ENCODE measurements at regions of chr11 and their contacts with region 1.

Region 1: DNA sequence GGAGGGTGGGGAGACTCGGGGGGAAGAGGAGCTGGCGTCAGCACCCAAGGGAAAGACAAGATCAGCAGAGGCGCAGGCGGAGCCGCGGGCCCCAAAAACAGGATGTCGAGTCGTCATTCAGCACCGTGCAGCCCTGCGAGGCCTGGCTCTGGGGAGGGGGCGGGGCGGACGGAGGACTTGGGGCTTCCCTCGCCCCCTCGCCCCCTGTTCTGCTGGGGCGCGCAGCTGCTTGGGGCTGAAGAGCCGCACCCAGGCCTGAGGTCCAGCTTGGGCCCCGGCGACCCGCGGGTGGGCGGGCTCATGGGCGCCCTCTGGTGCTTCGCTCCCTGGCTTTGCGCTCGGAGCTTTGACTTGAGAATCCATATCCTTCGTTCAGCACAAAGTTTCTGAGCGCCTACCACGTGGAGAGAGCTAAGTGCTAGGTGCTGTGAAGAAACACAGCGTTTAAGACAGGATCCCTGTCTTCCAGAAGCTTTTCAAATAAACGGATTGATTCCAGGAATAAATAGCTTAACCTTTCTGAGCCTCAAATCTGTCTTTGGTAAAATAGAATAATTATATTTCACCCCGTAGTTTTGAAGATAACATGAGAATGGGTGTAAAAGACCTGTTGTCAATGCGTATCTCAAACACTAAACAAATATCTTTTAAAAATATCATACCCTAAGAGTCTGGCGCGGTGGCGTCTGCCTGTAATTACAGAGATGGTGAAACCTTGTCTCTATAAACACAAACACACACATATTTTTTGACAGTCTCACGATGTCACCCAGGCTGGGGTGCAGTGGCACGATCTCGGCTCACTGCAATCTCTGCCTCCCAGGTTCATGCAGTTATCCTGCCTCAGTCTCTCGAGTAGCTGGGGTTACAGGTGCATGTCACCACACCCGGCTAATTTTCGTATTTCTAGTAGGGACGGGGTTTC is 929 bp upstream of the RHOG start:
- DNase-seq: peak; percentile 80 to 98 (median 94)
- ATAC-seq: peak; percentile 27
- H3K4me3 ChIP-seq: peak overlapping the region; percentile 70 to 95
- H3K4me3 Mint-ChIP-seq: peak overlapping the region; percentile 85
- H3K27ac ChIP-seq: peak overlapping the region; percentile 92 to 95
- H3K27ac Mint-ChIP-seq: peak overlapping the region; percentile 97
- H3K4me1 ChIP-seq: peaks cover 34% of the 10 kb centered on the region
- H3K4me1 Mint-ChIP-seq: peaks cover 46% of the 10 kb centered on the region
- H3K27me3 ChIP-seq: no peaks in the 10 kb centered on the region
- H3K27me3 Mint-ChIP-seq: no peaks in the 10 kb centered on the region
- CTCF ChIP-seq: peak; percentile 66

Region 2: GRCh38 chr11:3632070-3632660 is 209.5 kb before region 1 on chr11:
- CTCF ChIA-PET with region 1: no interaction called
- POLR2A ChIA-PET with region 1: no interaction called
- intact Hi-C with region 1: no loop called
- DNase-seq: no peak
- ATAC-seq: no peak
- H3K4me3 ChIP-seq: no peak overlapping the region
- H3K4me3 Mint-ChIP-seq: no peak overlapping the region
- H3K27ac ChIP-seq: no peak overlapping the region
- H3K27ac Mint-ChIP-seq: no peak overlapping the region
- H3K4me1 ChIP-seq: no peaks in the 10 kb centered on the region
- H3K4me1 Mint-ChIP-seq: no peaks in the 10 kb centered on the region
- H3K27me3 ChIP-seq: no peaks in the 10 kb centered on the region
- H3K27me3 Mint-ChIP-seq: peaks cover 8% of the 10 kb centered on the region
- CTCF ChIP-seq: no peak

Region 3: GRCh38 chr11:3781423-3781822 is 60.3 kb before region 1 on chr11:
- CTCF ChIA-PET with region 1: interaction called, 5 read pairs
- POLR2A ChIA-PET with region 1: interaction called, 4 read pairs
- intact Hi-C with region 1: loop called in 1 of 2 experiments (anchors 1 kb)
- DNase-seq: peak in 1 of 9 experiments; percentile 32
- ATAC-seq: no peak
- H3K4me3 ChIP-seq: no peak overlapping the region
- H3K4me3 Mint-ChIP-seq: no peak overlapping the region
- H3K27ac ChIP-seq: no peak overlapping the region
- H3K27ac Mint-ChIP-seq: no peak overlapping the region
- H3K4me1 ChIP-seq: peaks cover 34% of the 10 kb centered on the region
- H3K4me1 Mint-ChIP-seq: peaks cover 48% of the 10 kb centered on the region
- H3K27me3 ChIP-seq: no peaks in the 10 kb centered on the region
- H3K27me3 Mint-ChIP-seq: no peaks in the 10 kb centered on the region
- CTCF ChIP-seq: no peak

Region 4: GRCh38 chr11:3807909-3808860 is 33.5 kb before region 1 on chr11 and contains the start of gene PGAP2:
- CTCF ChIA-PET with region 1: interaction called, 15 read pairs
- POLR2A ChIA-PET with region 1: interaction called, 20 read pairs
- intact Hi-C with region 1: loop called in 1 of 2 experiments (anchors 1 kb)
- DNase-seq: peak; percentile 28 to 76 (median 60)
- ATAC-seq: peak; percentile 71
- H3K4me3 ChIP-seq: peak within 1 kb of the TSS; percentile 71 to 98
- H3K4me3 Mint-ChIP-seq: peak within 1 kb of the TSS; percentile 97
- H3K27ac ChIP-seq: peak within 1 kb of the TSS; percentile 49 to 62
- H3K27ac Mint-ChIP-seq: peak within 1 kb of the TSS; percentile 91
- H3K4me1 ChIP-seq: peaks cover 5% of the 10 kb centered on the region
- H3K4me1 Mint-ChIP-seq: peaks cover 15% of the 10 kb centered on the region
- H3K27me3 ChIP-seq: no peaks in the 10 kb centered on the region
- H3K27me3 Mint-ChIP-seq: no peaks in the 10 kb centered on the region
- CTCF ChIP-seq: peak; percentile 59
- total RNA-seq, gene PGAP2: 16.3 to 18.5 TPM

Region 5: GRCh38 chr11:3894128-3894731 is 52.5 kb after region 1 on chr11:
- CTCF ChIA-PET with region 1: no interaction called
- POLR2A ChIA-PET with region 1: no interaction called
- intact Hi-C with region 1: no loop called
- DNase-seq: peak in 4 of 9 experiments; percentile 12 to 49 (median 27)
- ATAC-seq: peak; percentile 57
- H3K4me3 ChIP-seq: no peak overlapping the region
- H3K4me3 Mint-ChIP-seq: peak overlapping the region; percentile 16
- H3K27ac ChIP-seq: peak overlapping the region in 1 of 2 experiments; percentile 45
- H3K27ac Mint-ChIP-seq: peak overlapping the region; percentile 88
- H3K4me1 ChIP-seq: peaks cover 32% of the 10 kb centered on the region
- H3K4me1 Mint-ChIP-seq: peaks cover 63% of the 10 kb centered on the region
- H3K27me3 ChIP-seq: no peaks in the 10 kb centered on the region
- H3K27me3 Mint-ChIP-seq: no peaks in the 10 kb centered on the region
- CTCF ChIP-seq: no peak

Region 6: DNA sequence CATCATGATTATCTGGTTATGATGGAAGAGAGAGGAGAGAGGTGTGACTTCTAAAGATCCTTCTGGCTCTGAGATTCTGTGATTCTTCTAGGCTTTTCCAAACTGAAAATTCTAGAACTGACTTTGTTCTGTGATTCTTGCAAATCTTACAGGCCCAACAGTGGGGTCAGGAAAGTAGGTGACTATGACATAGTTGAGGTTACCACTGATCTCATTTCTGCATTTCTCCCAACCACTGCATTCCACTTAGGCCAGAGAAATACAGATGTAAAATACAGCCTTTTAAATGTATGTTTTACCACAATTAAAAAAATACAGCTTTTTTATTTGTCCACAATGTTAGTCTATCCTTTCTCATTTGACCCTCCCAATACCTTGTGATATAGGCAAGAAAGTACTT is 97.5 kb after region 1 on chr11:
- CTCF ChIA-PET with region 1: interaction called, 10 read pairs
- POLR2A ChIA-PET with region 1: interaction called, 4 read pairs
- intact Hi-C with region 1: no loop called
- DNase-seq: no peak
- ATAC-seq: peak; percentile 26
- H3K4me3 ChIP-seq: no peak overlapping the region
- H3K4me3 Mint-ChIP-seq: no peak overlapping the region
- H3K27ac ChIP-seq: no peak overlapping the region
- H3K27ac Mint-ChIP-seq: peak overlapping the region; percentile 78
- H3K4me1 ChIP-seq: peaks cover 61% of the 10 kb centered on the region
- H3K4me1 Mint-ChIP-seq: peaks cover 92% of the 10 kb centered on the region
- H3K27me3 ChIP-seq: no peaks in the 10 kb centered on the region
- H3K27me3 Mint-ChIP-seq: no peaks in the 10 kb centered on the region
- CTCF ChIP-seq: no peak

Region 7: GRCh38 chr11:3959015-3959919 is 117.6 kb after region 1 on chr11:
- CTCF ChIA-PET with region 1: no interaction called
- POLR2A ChIA-PET with region 1: no interaction called
- intact Hi-C with region 1: no loop called
- DNase-seq: peak in 1 of 9 experiments; percentile 31
- ATAC-seq: no peak
- H3K4me3 ChIP-seq: no peak overlapping the region
- H3K4me3 Mint-ChIP-seq: no peak overlapping the region
- H3K27ac ChIP-seq: no peak overlapping the region
- H3K27ac Mint-ChIP-seq: no peak overlapping the region
- H3K4me1 ChIP-seq: peaks cover 55% of the 10 kb centered on the region
- H3K4me1 Mint-ChIP-seq: peaks cover 81% of the 10 kb centered on the region
- H3K27me3 ChIP-seq: no peaks in the 10 kb centered on the region
- H3K27me3 Mint-ChIP-seq: no peaks in the 10 kb centered on the region
- CTCF ChIP-seq: no peak

Region 8: DNA sequence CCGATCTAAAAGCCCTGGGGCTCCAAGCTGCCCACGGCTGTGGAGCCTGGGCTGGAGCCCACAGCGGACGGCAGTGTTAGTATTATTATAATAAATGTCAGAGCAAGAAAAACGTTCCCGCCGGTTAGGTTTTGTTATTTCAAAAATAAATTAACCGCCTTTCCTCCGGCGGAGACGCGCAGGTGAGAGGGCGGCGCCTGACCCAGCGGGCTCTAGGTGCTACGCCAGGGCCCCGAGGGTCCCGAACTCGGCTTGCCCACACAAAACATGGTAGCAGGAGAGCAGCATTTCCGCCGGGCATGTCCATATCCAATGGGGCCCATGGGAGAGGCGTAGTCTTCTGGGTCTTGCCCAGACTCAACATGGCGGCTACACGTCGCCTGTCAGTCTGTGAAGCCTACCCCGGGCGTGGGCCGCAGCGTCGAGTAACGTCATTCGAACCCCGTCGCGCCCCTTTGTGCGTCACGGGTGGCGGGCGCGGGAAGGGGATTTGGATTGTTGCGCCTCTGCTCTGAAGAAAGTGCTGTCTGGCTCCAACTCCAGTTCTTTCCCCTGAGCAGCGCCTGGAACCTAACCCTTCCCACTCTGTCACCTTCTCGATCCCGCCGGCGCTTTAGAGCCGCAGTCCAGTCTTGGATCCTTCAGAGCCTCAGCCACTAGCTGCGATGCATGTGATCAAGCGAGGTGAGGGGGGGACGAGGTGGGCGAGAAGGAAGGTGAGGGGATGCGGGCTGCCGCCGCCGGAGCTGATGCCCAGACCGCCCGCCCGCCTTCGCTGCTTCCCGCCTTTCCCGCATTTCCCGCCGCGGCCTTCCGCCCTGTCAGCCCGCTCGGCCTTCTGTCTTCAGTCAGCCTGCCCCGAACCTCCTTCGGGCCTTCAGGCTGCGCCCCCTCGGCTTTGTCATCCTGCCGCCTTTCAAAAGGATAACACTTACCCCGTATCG is 252.9 kb after region 1 on chr11 and contains the start of gene RRM1:
- CTCF ChIA-PET with region 1: no interaction called
- POLR2A ChIA-PET with region 1: interaction called, 4 read pairs
- intact Hi-C with region 1: loop called in 1 of 2 experiments (anchors 1 kb)
- DNase-seq: peak; percentile 84 to 97 (median 92)
- ATAC-seq: peak; percentile 90
- H3K4me3 ChIP-seq: peak within 1 kb of the TSS; percentile 74 to 78
- H3K4me3 Mint-ChIP-seq: peak within 1 kb of the TSS; percentile 98
- H3K27ac ChIP-seq: peak within 1 kb of the TSS; percentile 81 to 86
- H3K27ac Mint-ChIP-seq: peak within 1 kb of the TSS; percentile 99
- H3K4me1 ChIP-seq: peaks cover 49% of the 10 kb centered on the region
- H3K4me1 Mint-ChIP-seq: peaks cover 79% of the 10 kb centered on the region
- H3K27me3 ChIP-seq: no peaks in the 10 kb centered on the region
- H3K27me3 Mint-ChIP-seq: no peaks in the 10 kb centered on the region
- CTCF ChIP-seq: no peak
- total RNA-seq, gene RRM1: 53.1 to 57.3 TPM